ENCODE measurements at regions of chr20 and their contacts with region 1.

Region 1: DNA sequence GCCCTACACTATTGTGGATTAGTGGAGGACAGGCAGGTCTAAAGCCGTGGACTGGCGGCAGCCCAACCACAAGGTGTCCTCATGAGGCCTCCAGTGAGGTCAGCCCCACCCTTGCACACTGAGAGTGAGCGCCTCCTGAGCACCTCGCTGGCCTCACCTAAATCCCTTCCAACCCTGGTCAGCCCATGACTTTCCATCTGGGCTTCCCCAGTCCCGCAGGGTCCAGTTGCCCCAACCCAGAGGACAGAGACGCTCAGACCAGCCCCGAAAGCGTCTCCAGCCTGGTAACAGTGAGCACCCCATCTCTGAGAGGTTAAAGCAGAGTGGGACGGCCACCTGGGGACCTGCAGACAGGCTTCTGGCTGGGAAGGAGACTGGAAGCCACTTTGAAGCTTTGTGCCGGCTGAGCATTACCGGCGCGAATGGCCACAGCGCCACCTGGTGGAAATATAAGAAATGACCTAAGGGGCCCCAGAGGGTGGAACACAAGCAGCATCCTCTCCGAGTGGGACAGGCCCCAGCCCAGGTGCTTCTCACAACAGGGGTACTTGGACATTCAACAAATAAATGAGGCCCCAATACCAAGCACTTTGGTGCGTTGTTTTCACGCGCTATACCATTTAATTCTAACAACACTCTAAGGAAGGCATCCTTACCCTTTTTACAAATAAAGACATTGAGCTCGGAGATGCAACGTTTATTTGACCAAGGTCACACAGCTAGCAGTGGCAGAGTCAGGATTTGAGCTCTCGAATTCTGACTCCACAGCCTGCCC is 65.7 kb upstream of the TOP1 start:
- DNase-seq: peak; percentile 63 to 82
- ATAC-seq: peak; percentile 87 to 96
- H3K4me3 ChIP-seq: no peak overlapping the region
- H3K27ac ChIP-seq: no peak overlapping the region
- H3K4me1 ChIP-seq: no peaks in the 10 kb centered on the region
- CTCF ChIP-seq: peak; percentile 85
- EP300 ChIP-seq: no peak
- POLR2A ChIP-seq: no peak
- RAD21 ChIP-seq: peak; percentile 83 to 87

Region 2: DNA sequence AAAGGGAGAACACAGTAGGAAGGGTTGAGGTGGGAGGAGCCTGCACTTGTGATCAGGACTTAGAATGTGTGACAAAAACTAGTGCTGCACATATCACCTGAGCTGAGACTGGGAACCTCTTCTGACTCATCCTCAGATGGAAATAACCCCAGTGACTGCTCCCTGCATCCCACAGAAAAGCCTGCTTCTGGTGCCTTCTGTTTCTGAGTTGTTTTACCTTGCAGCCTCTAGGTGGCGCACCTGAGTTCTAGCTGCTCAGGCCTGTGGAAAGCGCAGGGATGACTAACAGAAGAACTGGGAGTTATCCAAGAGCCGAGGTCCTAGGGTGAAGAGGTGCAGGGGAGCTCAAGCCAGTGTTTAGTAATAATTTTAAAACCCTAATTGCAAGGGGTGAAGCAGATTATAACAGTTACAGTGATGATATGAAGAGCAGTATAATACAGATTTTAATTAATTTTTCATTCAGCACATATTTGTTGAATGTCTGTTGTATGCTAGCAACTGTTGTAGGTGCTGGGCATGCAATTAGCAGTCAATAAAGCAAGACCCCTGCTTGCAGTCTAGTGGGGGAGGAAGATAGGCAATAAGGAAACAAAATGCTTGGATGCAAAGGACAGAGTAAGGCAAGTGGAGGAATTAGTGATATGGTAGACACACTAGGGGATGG is 1698.3 kb before region 1 on chr20:
- CTCF ChIA-PET with region 1: interaction called, 40 read pairs
- POLR2A ChIA-PET with region 1: no interaction called
- DNase-seq: peak; percentile 71 to 80
- ATAC-seq: peak; percentile 88 to 89
- H3K4me3 ChIP-seq: no peak overlapping the region
- H3K27ac ChIP-seq: no peak overlapping the region
- H3K4me1 ChIP-seq: no peaks in the 10 kb centered on the region
- CTCF ChIP-seq: peak; percentile 71
- EP300 ChIP-seq: no peak
- POLR2A ChIP-seq: no peak
- RAD21 ChIP-seq: peak; percentile 28 to 44; a peak in 4 of 5 replicates

Region 3: DNA sequence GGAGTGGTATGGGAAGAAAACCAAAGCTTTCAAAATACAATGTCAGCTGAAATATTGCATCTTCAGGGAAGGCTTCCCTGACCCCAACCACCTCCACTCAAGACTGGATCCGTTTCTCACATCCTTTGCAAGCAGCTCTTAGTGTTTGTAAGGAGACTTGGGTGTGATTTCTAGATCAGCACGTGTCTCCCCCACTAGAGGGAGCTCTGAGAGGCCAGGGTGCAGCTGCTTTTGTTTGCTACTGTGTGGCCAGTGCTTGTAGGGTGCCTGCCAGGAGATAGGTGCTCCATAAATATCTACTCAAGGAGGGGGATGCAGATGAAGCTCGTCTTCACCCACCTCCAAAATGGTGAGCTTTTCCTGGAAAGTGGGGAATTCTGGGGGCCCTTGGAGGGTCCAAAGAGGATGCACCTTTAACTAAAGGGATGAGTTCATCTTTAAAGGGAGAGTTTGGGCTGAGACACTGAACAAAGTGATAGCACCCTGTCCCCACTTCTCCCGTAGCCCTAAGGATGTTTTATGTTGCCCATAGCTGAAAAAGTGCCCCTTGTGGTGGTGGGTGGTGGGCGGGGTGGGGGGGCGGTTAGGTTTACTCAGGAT is 221.3 kb before region 1 on chr20:
- CTCF ChIA-PET with region 1: interaction called, 19 read pairs
- POLR2A ChIA-PET with region 1: no interaction called
- DNase-seq: peak; percentile 39 to 56
- ATAC-seq: peak in 1 of 2 experiments; percentile 81; a peak in 3 of 6 replicates
- H3K4me3 ChIP-seq: no peak overlapping the region
- H3K27ac ChIP-seq: no peak overlapping the region
- H3K4me1 ChIP-seq: no peaks in the 10 kb centered on the region
- CTCF ChIP-seq: peak; percentile 46
- EP300 ChIP-seq: no peak
- POLR2A ChIP-seq: no peak
- RAD21 ChIP-seq: peak in 1 of 2 experiments; percentile 37; a peak in 2 of 5 replicates

Region 4: GRCh38 chr20:40945754-40946450 is 17.0 kb before region 1 on chr20:
- CTCF ChIA-PET with region 1: interaction called, 54 read pairs
- POLR2A ChIA-PET with region 1: no interaction called
- DNase-seq: peak; percentile 40 to 59
- ATAC-seq: peak; percentile 93 to 97
- H3K4me3 ChIP-seq: no peak overlapping the region
- H3K27ac ChIP-seq: no peak overlapping the region
- H3K4me1 ChIP-seq: no peaks in the 10 kb centered on the region
- CTCF ChIP-seq: peak; percentile 42
- EP300 ChIP-seq: no peak
- POLR2A ChIP-seq: no peak
- RAD21 ChIP-seq: peak; percentile 51 to 77

Region 5: DNA sequence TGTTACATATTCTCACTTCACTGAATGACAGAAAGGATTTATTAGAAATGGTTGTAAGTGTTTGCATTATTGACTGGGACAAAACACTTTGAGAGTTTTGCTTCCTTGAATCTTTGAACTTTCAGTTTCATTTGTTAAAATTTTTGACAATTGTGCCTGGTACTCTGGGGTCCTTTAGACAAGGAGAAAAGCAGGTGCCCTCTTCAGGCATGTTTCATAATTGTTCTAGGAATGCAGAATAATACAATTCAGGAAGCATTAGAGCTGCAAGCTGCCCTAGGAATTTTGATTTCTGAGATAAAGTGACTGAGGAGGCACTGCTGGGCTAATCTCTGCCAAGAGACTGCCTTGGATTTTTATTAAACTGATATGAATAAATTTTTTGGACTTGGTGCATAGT is 115.4 kb after region 1 on chr20:
- CTCF ChIA-PET with region 1: interaction called, 14 read pairs
- POLR2A ChIA-PET with region 1: no interaction called
- DNase-seq: peak; percentile 15 to 38
- ATAC-seq: peak; percentile 82 to 86
- H3K4me3 ChIP-seq: no peak overlapping the region
- H3K27ac ChIP-seq: no peak overlapping the region
- H3K4me1 ChIP-seq: peaks cover 19% of the 10 kb centered on the region; the same call in 2 of the 3 replicates
- CTCF ChIP-seq: peak; percentile 53
- EP300 ChIP-seq: no peak
- POLR2A ChIP-seq: no peak
- RAD21 ChIP-seq: peak; percentile 56 to 62

Region 6: DNA sequence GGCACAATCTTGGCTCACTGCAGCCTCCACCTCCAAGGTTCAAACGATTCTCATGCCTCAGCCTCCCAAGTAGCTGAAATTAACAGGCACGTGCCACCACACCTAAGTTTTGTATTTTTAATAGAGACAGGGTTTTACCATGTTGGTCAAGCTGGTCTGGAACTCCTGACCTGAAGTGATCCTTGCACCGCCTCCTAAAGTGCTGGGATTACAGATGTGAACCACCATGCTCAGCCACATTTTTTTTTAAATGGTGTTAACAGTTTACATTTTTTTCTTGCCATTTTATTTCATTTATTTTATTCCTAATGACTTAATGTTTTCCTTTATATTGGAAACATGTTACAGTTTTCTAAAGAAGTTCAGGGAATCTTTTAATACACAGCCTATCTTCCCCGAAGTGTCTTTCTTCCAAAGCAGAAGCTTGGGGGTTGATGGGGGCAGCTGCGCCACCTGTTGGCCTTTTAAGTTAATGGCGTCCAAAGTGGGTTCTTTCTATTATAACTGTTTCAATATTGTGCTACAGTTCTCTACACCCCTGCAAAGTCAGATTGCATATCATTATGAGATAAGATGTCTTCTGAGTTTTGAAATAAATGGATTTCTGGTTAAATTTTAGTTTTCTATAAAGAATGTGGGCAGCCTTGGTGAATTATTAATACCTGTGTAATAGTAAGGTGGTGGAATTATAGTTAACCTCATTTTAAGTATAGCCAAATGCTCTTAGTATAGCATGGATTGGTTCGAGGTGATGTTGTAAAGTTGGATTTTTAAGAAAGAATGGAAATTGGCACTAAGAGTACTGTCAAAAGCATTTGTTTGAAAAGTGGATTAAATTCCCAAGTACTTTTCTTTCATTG is 132.4 kb after region 1 on chr20:
- CTCF ChIA-PET with region 1: interaction called, 145 read pairs
- POLR2A ChIA-PET with region 1: no interaction called
- DNase-seq: peak; percentile 53 to 64
- ATAC-seq: peak; percentile 86 to 87
- H3K4me3 ChIP-seq: no peak overlapping the region
- H3K27ac ChIP-seq: no peak overlapping the region
- H3K4me1 ChIP-seq: no peaks in the 10 kb centered on the region
- CTCF ChIP-seq: peak; percentile 91
- EP300 ChIP-seq: no peak
- POLR2A ChIP-seq: no peak
- RAD21 ChIP-seq: peak; percentile 79 to 81

Measured in A549 (cell line).